CD4-positive, alpha-beta T cell (primary cell): ENCODE measurements at regions of chr7 and their contacts with region 1.

Region 1: GRCh38 chr7:2519119-2519930 is at the start of gene LFNG:
- DNase-seq: peak; percentile 63 to 94 (median 84)
- ATAC-seq: peak; percentile 63
- H3K4me3 ChIP-seq: peak within 1 kb of the TSS; percentile 99
- H3K4me3 Mint-ChIP-seq: peak within 1 kb of the TSS; percentile 95
- H3K27ac ChIP-seq: peak within 1 kb of the TSS; percentile 36 to 88
- H3K27ac Mint-ChIP-seq: peak within 1 kb of the TSS; percentile 84
- H3K4me1 ChIP-seq: peaks cover 51% of the 10 kb centered on the region
- H3K4me1 Mint-ChIP-seq: peaks cover 37% of the 10 kb centered on the region
- H3K27me3 ChIP-seq: no peaks in the 10 kb centered on the region
- H3K27me3 Mint-ChIP-seq: no peaks in the 10 kb centered on the region
- CTCF ChIP-seq: no peak
- total RNA-seq, gene LFNG: 96.7 to 99.8 TPM

Region 2: GRCh38 chr7:2109936-2110585 is 409.3 kb before region 1 on chr7:
- CTCF ChIA-PET with region 1: no interaction called
- POLR2A ChIA-PET with region 1: no interaction called
- intact Hi-C with region 1: no loop called
- DNase-seq: peak in 4 of 14 experiments; percentile 9 to 62 (median 37)
- ATAC-seq: no peak
- H3K4me3 ChIP-seq: no peak overlapping the region
- H3K4me3 Mint-ChIP-seq: no peak overlapping the region
- H3K27ac ChIP-seq: no peak overlapping the region
- H3K27ac Mint-ChIP-seq: no peak overlapping the region
- H3K4me1 ChIP-seq: peaks cover 19% of the 10 kb centered on the region
- H3K4me1 Mint-ChIP-seq: peaks cover 26% of the 10 kb centered on the region
- H3K27me3 ChIP-seq: no peaks in the 10 kb centered on the region
- H3K27me3 Mint-ChIP-seq: no peaks in the 10 kb centered on the region
- CTCF ChIP-seq: no peak

Region 3: GRCh38 chr7:2232766-2233520 is 286.4 kb before region 1 on chr7 and contains the start of gene MAD1L1:
- CTCF ChIA-PET with region 1: no interaction called
- POLR2A ChIA-PET with region 1: no interaction called
- intact Hi-C with region 1: no loop called
- DNase-seq: peak; percentile 81 to 94 (median 86)
- ATAC-seq: peak; percentile 91
- H3K4me3 ChIP-seq: peak within 1 kb of the TSS; percentile 78
- H3K4me3 Mint-ChIP-seq: peak within 1 kb of the TSS; percentile 94
- H3K27ac ChIP-seq: peak within 1 kb of the TSS in 1 of 2 donors; percentile 67
- H3K27ac Mint-ChIP-seq: peak within 1 kb of the TSS; percentile 70
- H3K4me1 ChIP-seq: peaks cover 34% of the 10 kb centered on the region
- H3K4me1 Mint-ChIP-seq: peaks cover 36% of the 10 kb centered on the region
- H3K27me3 ChIP-seq: no peaks in the 10 kb centered on the region
- H3K27me3 Mint-ChIP-seq: no peaks in the 10 kb centered on the region
- CTCF ChIP-seq: no peak
- total RNA-seq, gene MAD1L1: 157 to 160 TPM

Region 4: DNA sequence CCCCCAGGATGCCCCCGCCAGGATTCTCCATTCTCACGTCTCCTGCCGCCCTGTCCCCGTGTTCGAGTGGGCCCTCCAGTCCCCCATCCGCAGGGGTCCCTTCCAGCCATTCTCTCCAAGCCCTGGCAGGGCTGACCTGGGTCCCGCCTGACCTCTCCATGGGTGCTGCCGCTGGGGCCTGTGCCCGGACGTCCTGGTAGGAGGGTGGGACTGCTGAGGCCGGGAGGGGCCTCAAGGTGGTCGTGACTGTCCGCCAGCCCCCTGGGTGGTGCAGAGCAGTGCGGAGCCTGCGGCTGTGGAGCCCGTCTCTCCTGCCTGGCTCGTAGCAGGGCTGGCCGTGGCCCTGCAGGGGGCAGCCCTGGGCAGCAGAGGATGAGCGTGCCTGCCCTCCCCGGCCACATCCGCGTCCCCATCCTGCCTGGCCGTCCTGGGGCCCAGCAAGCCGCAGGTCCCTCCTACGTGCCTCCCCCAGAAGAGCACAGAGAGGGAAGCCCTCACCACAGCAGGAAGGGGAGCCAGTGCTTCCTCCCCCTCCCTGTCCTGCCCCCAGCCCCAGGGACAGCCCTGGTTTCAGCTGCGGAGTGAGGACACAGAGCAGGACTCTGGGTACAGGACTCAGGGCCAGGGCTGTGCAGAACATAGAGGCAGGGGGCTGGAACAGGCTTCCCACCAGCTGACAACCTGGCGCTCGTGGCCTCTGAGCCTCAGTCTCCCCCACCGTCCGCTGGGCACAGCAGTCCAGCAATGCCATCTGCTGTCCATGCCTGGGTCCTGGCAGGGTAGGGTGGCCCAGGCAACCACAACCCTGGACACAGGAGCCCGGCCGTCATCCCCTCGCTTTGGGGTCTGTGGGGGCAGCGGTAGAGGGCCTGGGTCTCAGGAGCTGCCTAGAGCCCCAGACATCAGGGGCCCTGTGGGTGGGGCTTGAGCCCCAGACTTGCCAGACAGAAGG is 41.6 kb before region 1 on chr7:
- CTCF ChIA-PET with region 1: no interaction called
- POLR2A ChIA-PET with region 1: no interaction called
- intact Hi-C with region 1: loop called in 1 of 2 experiments (anchors 5 kb)
- DNase-seq: peak; percentile 19 to 82 (median 58)
- ATAC-seq: peak; percentile 94
- H3K4me3 ChIP-seq: no peak overlapping the region
- H3K4me3 Mint-ChIP-seq: no peak overlapping the region
- H3K27ac ChIP-seq: no peak overlapping the region
- H3K27ac Mint-ChIP-seq: no peak overlapping the region
- H3K4me1 ChIP-seq: peaks cover 19% of the 10 kb centered on the region
- H3K4me1 Mint-ChIP-seq: no peaks in the 10 kb centered on the region
- H3K27me3 ChIP-seq: no peaks in the 10 kb centered on the region
- H3K27me3 Mint-ChIP-seq: no peaks in the 10 kb centered on the region
- CTCF ChIP-seq: peak; percentile 77

Region 5: DNA sequence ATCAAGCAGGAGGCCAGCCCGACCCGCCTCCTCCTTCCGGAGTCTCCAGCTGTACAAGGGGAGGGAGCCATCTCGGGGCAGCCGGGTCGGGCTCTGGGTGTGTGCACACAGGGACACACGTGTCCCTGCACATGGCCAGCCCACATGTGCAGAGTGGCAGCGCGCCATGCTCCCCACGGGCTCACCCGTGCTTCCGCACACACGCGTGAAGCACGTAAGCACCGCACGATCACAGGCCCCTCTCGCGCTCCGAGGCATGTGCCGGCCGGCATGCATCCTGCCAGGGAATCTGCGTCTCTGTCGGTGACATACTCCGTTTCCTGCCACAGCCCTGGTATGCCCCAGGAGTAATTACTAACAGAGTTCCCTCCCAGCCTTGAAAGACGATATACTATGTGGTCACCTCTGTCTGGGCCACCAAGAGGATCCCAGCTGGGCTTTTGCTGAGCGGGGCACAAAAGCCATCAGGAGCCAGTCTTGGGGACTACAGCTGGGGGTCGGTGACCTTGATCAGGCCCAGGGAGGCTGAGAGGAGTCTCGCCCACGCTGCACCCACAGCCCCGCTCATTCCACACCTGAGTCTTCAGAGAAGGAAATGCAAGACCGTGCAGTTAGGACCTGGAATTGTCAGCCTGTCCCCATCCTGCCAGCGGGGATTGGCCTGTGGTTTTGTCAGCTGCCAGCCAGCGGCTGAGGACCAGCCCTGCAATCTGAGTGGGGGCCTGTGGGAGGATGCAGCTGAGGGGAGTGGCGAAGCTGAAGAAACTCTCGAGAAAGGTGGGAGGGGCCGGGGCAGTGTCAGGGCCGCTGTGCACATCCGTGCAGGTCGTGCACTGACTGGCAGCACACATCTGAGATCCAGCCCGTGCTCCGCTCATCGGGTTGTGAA is 10.8 kb before region 1 on chr7:
- CTCF ChIA-PET with region 1: interaction called, 3 read pairs
- POLR2A ChIA-PET with region 1: interaction called, 218 read pairs
- intact Hi-C with region 1: loop called (anchors 1 kb)
- DNase-seq: peak; percentile 71 to 95 (median 84)
- ATAC-seq: peak; percentile 73
- H3K4me3 ChIP-seq: peak overlapping the region; percentile 47
- H3K4me3 Mint-ChIP-seq: peak overlapping the region; percentile 78
- H3K27ac ChIP-seq: peak overlapping the region; percentile 84 to 97
- H3K27ac Mint-ChIP-seq: peak overlapping the region; percentile 98
- H3K4me1 ChIP-seq: peaks cover 70% of the 10 kb centered on the region
- H3K4me1 Mint-ChIP-seq: peaks cover 68% of the 10 kb centered on the region
- H3K27me3 ChIP-seq: no peaks in the 10 kb centered on the region
- H3K27me3 Mint-ChIP-seq: no peaks in the 10 kb centered on the region
- CTCF ChIP-seq: no peak

Region 6: DNA sequence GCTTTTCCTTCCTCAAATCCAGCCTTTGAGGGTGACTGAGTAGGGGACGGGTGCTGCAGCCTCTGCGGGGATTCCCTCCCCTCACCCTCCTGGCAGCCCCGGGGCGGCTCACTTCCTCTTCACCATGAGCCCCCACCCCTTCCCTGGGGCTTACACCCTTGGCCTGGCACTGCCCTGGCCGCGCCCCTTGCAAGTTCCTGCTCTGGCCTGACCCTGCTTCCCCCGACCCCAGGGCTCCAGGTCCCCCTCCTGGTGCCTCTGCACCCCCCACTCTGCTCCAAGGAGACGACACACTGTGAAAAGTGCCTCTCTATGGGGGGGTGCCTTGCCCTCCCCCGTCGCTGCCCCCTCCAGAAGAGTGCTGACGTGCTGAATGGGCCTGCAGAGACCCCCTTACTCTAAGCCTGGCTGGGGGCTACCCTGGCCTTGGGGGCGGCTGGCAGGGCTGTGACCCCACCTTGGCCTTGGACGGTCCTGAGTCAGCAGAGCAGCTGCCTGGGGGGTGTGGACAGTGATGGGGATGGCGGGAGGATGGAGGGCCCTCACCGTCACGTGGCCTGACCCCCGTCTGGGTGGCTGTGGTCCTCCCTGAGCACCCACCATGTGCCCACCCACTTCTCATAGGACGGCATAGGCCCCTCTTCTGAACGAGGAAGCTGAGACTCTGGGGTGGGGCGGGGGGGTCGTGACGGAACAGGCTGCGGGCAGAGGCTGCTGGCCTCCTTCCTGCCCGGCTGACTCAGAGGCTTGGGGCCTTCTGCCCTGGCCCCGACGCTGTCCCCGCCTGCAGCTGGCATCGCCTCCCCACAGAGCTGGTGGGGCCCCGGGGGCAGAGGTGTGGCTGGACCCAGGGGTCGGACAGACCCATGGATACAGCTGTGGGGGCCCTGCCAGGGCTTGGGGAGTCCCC is 10.1 kb after region 1 on chr7:
- CTCF ChIA-PET with region 1: interaction called, 6 read pairs
- POLR2A ChIA-PET with region 1: interaction called, 9 read pairs
- intact Hi-C with region 1: loop called in 1 of 2 experiments (anchors 1 kb)
- DNase-seq: peak in 11 of 14 experiments; percentile 44 to 87 (median 60)
- ATAC-seq: peak; percentile 27
- H3K4me3 ChIP-seq: peak overlapping the region; percentile 35
- H3K4me3 Mint-ChIP-seq: peak overlapping the region; percentile 84
- H3K27ac ChIP-seq: peak overlapping the region; percentile 88 to 98
- H3K27ac Mint-ChIP-seq: peak overlapping the region; percentile 98
- H3K4me1 ChIP-seq: peaks cover 71% of the 10 kb centered on the region
- H3K4me1 Mint-ChIP-seq: peaks cover 54% of the 10 kb centered on the region
- H3K27me3 ChIP-seq: no peaks in the 10 kb centered on the region
- H3K27me3 Mint-ChIP-seq: no peaks in the 10 kb centered on the region
- CTCF ChIP-seq: no peak

Region 7: DNA sequence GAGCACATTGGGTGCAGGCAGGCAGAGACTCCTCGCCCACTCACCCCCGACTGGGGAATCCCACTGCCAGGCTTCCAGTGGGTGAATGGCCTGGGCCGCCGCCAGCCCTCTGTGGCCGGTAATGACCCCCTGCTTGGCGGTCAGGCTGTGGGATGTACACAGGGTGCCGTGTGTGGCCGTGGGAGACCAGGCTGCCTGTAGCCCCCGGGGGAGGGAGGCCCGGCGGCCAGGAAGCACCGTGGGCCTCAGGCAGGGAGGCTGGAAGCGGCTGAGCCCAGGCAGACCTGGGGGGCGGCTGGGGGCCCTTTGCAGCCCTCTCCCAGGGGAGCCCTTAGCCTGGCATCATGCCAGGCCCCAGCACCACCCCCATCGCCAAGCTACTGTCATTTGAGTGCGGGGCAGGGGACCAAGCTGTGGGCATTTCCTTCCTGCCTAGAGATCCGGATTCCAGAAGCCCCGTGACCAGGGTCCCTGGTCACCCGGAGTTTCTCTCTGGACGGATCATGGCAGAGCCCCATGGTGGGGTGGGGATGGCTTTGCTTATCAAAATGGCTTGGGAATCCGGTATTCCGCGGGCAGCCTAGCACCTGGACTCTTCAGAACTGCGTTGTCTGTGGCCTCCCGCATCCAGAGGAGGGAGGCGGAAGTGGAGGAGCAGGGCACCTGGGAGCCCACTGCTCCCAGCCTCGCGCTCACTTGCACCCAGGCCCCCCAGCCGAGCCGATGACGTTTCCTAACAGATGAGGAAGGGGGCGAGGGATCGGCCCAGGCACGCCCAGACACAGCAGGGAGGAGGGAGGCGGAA is 113.6 kb after region 1 on chr7:
- CTCF ChIA-PET with region 1: no interaction called
- POLR2A ChIA-PET with region 1: interaction called, 3 read pairs
- intact Hi-C with region 1: loop called in 1 of 2 experiments (anchors 5 kb)
- DNase-seq: peak in 8 of 14 experiments; percentile 18 to 65 (median 46)
- ATAC-seq: peak; percentile 9
- H3K4me3 ChIP-seq: peak overlapping the region; percentile 85
- H3K4me3 Mint-ChIP-seq: peak overlapping the region; percentile 92
- H3K27ac ChIP-seq: no peak overlapping the region
- H3K27ac Mint-ChIP-seq: peak overlapping the region; percentile 66
- H3K4me1 ChIP-seq: peaks cover 34% of the 10 kb centered on the region
- H3K4me1 Mint-ChIP-seq: peaks cover 20% of the 10 kb centered on the region
- H3K27me3 ChIP-seq: no peaks in the 10 kb centered on the region
- H3K27me3 Mint-ChIP-seq: no peaks in the 10 kb centered on the region
- CTCF ChIP-seq: no peak